ENCODE measurements at regions of chr1 and their contacts with region 1.

Region 1: DNA sequence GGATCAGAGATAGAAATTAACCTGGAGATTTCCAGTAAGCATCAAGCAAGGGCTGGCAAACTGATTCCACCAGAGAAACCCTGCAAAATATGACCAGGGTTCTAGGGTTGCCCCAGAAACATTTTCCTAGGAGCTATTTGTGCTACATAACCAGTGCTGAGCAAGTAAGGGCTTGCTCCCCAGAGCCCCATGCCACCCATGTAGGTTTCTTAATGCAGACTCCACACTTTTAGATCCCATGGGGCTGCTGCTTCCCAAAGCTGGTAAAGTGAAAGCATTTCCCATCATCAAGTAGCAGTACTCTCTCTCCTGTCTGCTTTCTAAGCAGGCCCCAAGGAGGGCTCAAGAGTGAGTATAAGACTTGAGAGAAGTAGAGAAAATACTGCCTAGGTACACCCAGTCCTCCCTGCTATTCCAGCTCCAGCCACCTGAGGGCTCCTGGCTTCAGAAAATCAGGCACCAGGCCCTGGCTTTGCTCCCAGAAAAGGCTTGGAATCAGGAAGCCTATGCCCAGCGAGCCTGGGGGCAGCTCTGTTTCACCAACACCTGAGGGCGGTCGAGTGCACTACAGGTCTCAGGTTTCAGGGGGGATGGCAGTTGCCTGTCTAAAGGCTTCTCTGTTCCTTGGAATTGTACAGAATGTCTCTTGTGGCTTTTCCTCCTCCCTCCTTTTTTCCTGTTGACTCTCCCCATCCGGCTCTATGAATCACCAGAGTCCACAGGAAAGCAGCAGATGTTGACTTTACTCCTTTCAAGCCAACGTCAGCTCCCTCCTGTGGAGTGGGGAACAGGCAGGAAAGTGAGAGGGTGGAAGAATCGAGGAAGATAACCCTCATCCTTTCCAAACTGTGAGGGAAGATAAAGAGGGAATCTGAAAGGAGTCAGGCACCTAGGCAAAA is 6.2 kb upstream of the ANKRD35 start:
- DNase-seq: peak; percentile 77
- ATAC-seq: peak; percentile 84
- H3K4me3 Mint-ChIP-seq: no peak overlapping the region
- H3K27ac Mint-ChIP-seq: no peak overlapping the region
- H3K4me1 Mint-ChIP-seq: peaks cover under 1% of the 10 kb centered on the region
- H3K27me3 Mint-ChIP-seq: peaks cover under 1% of the 10 kb centered on the region
- CTCF ChIP-seq: peak; percentile 86

Region 2: DNA sequence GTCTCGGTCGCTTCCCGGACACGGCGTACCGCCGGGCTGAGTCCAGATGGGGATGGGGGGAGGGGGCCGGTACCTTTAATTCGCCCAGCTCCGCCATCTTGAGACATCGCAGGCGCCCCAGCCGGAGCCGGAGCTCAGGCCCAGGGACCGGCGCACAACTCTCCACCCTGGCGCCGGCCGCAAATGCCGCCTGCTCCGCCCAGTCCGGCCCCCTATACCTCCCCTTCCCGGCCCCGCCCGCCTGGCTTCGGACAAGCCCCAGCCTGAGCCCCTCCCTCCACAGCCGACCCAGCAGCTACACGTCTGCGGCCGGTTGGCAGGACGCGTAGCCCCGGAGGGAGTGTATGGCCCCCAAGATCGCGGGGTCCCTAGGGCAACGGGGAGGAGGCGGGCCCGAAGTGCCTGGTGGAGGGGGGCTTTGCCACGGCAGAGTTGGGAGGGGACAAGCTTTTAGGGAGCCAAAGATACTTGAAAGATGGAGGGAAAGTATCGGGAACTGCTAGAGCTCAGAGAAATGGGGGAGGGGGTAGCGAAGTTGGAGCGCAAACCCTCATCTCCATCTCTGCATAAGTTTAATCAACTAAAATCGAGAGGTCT is 32.8 kb before region 1 on chr1 and contains the start of gene PIAS3:
- CTCF ChIA-PET with region 1: interaction called, 24 read pairs
- POLR2A ChIA-PET with region 1: interaction called, 3 read pairs
- intact Hi-C with region 1: no loop called
- DNase-seq: peak; percentile 92
- ATAC-seq: peak; percentile 87
- H3K4me3 Mint-ChIP-seq: peak within 1 kb of the TSS; percentile 98
- H3K27ac Mint-ChIP-seq: peak within 1 kb of the TSS; percentile 86
- H3K4me1 Mint-ChIP-seq: peaks cover 14% of the 10 kb centered on the region
- H3K27me3 Mint-ChIP-seq: no peaks in the 10 kb centered on the region
- CTCF ChIP-seq: no peak
- total RNA-seq, gene PIAS3: 17.9 to 18.9 TPM

Region 3: GRCh38 chr1:145871994-145872924 is 19.6 kb before region 1 on chr1:
- CTCF ChIA-PET with region 1: interaction called, 24 read pairs
- POLR2A ChIA-PET with region 1: no interaction called
- intact Hi-C with region 1: no loop called
- DNase-seq: peak; percentile 47
- ATAC-seq: peak; percentile 81
- H3K4me3 Mint-ChIP-seq: peak overlapping the region; percentile 75
- H3K27ac Mint-ChIP-seq: peak overlapping the region; percentile 27
- H3K4me1 Mint-ChIP-seq: peaks cover 13% of the 10 kb centered on the region
- H3K27me3 Mint-ChIP-seq: peaks cover 8% of the 10 kb centered on the region
- CTCF ChIP-seq: no peak

Region 4: GRCh38 chr1:145879775-145880174 is 12.1 kb before region 1 on chr1:
- CTCF ChIA-PET with region 1: interaction called, 43 read pairs
- POLR2A ChIA-PET with region 1: interaction called, 3 read pairs
- intact Hi-C with region 1: no loop called
- DNase-seq: no peak
- ATAC-seq: no peak
- H3K4me3 Mint-ChIP-seq: no peak overlapping the region
- H3K27ac Mint-ChIP-seq: no peak overlapping the region
- H3K4me1 Mint-ChIP-seq: peaks cover 3% of the 10 kb centered on the region
- H3K27me3 Mint-ChIP-seq: peaks cover 12% of the 10 kb centered on the region
- CTCF ChIP-seq: no peak

Region 5: DNA sequence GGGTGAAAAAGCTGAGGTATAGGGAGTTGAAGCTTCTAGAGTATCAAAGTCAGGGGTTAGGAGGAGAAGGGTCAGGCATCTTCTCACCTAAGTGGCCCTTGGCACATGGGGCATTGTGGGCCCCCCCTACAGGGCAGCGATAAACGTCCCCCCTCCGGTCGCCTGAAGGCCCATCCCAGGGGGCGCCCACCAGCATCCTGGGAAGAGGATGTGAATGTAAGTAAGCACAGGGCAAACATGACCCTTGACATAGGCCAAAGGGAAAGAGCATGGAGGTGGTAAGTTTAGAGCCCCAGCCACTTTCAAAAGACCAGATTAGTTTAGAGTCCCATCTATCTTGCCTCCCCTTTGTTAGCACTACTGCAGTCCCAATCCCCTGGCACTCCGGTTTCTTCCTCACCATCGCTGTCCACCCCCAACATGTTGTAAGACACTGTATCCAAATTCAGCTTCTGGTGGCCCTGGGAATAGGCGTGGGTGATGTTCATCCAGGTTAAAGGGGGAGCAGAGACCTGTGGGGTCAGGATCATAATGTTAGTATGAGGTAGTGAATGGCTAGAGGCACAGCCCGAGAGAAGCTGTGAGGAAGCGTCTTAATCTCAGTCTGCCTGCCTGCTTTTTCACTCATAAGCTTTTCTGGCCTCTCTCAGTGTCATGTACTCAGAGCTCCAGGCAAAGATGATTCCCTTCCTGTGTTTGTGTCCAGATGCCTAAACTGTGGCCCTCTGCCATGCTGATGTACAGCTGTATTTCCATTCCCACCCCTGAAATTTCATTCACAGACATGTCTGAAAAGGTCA is 15.3 kb after region 1 on chr1:
- CTCF ChIA-PET with region 1: interaction called, 23 read pairs
- POLR2A ChIA-PET with region 1: no interaction called
- intact Hi-C with region 1: no loop called
- DNase-seq: no peak
- ATAC-seq: no peak
- H3K4me3 Mint-ChIP-seq: no peak overlapping the region
- H3K27ac Mint-ChIP-seq: no peak overlapping the region
- H3K4me1 Mint-ChIP-seq: peaks cover 5% of the 10 kb centered on the region
- H3K27me3 Mint-ChIP-seq: no peaks in the 10 kb centered on the region
- CTCF ChIP-seq: no peak

Region 6: GRCh38 chr1:145912128-145912641 is 20.3 kb after region 1 on chr1:
- CTCF ChIA-PET with region 1: interaction called, 23 read pairs
- POLR2A ChIA-PET with region 1: no interaction called
- intact Hi-C with region 1: no loop called
- DNase-seq: no peak
- ATAC-seq: no peak
- H3K4me3 Mint-ChIP-seq: no peak overlapping the region
- H3K27ac Mint-ChIP-seq: peak overlapping the region; percentile 31
- H3K4me1 Mint-ChIP-seq: peaks cover 23% of the 10 kb centered on the region
- H3K27me3 Mint-ChIP-seq: no peaks in the 10 kb centered on the region
- CTCF ChIP-seq: no peak

Region 7: DNA sequence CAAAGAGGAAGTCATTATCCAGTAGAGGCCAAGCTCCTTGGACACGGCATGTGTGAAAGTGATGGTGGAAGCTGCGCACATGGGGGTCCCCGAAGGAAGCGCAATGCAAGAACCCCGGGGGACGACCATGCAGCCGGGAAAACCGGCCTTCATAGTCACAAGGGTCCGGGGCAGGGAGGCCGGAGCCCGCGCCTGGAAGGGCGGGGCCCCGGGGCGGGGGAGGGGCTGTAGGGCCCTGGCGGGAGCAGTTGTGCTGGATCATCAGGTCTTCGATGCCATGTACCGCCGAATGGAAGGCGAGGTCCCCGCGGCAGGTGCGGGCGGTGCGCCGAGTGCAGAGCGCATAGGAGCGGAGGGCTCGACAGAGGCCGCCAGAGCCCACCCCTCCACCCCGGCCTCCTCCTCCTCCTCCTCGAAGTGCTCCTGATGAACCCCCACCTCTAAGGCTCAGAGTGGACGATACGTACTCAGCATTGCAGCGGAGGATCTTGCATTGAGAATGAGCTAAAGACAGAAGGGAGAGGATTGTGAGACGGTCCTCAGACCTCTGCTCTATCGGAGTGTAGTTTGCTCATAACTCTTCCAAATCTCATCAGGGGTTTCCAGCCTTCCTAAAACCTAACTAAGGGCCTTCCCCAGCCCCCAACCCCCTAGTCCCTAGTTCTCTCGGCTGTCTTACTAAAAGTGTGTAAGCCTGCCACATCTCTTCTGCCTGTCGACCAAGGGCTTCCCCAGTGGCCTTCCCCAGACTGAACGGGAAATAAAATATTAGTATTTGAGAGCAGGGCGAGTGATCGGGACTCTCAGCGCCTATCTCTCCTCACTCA is 127.6 kb after region 1 on chr1:
- CTCF ChIA-PET with region 1: interaction called, 17 read pairs
- POLR2A ChIA-PET with region 1: no interaction called
- intact Hi-C with region 1: no loop called
- DNase-seq: no peak
- ATAC-seq: peak; percentile 39
- H3K4me3 Mint-ChIP-seq: peak overlapping the region; percentile 22
- H3K27ac Mint-ChIP-seq: no peak overlapping the region
- H3K4me1 Mint-ChIP-seq: peaks cover 7% of the 10 kb centered on the region
- H3K27me3 Mint-ChIP-seq: peaks cover 37% of the 10 kb centered on the region
- CTCF ChIP-seq: no peak

Measured in activated CD8-positive, alpha-beta T cell treated with anti-CD3 and anti-CD28 coated beads for 36 hours (primary cell).